Panc1 (cell line): ENCODE measurements at regions of chr6 and their contacts with region 1.

Region 1: DNA sequence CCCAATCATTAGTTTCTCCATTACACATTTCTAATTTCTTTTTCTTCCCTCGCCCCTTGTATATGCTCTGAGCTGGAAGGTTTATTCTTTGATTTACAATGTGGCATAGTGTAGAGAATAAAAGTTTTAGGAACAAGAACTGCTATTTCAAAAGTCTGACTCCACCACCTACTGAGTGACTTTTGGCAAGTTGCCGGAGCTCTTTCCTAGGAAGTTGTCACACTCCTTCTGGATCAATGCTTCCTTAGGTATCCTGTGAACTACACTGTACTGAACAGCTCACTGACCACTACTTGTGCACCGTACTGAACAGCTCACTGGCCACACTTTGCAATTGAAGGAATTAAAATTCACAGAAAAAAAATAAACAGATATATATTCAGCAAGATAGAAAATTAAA is 458.2 kb downstream of the FRK start:
- DNase-seq: no peak
- ATAC-seq: no peak
- H3K4me3 ChIP-seq: no peak overlapping the region
- H3K27ac ChIP-seq: no peak overlapping the region
- H3K4me1 ChIP-seq: no peaks in the 10 kb centered on the region
- H3K27me3 ChIP-seq: no peaks in the 10 kb centered on the region
- CTCF ChIP-seq: no peak

Region 2: DNA sequence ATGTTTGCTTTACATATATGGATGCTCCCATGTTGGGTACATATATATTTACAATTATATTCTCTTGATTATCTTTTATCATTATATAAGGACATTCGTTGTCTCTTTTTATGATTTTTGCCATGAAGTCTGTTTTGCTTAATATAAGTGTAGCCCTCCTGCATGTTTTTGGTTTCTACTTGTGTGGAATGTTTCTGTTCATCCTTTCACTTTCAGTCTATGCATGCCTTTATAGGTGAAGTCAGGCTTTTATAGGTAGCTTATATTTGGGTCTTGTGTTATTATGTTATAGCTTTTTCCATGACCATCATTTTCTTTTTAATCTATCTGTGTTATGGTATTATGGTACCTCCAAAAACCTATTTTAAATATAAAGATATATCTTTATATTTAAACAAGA is 647.1 kb before region 1 on chr6:
- CTCF ChIA-PET with region 1: no interaction called
- POLR2A ChIA-PET with region 1: interaction called, 13 read pairs
- in situ Hi-C with region 1: no loop called
- intact Hi-C with region 1: no loop called
- DNase-seq: no peak
- ATAC-seq: no peak
- H3K4me3 ChIP-seq: no peak overlapping the region
- H3K27ac ChIP-seq: no peak overlapping the region
- H3K4me1 ChIP-seq: no peaks in the 10 kb centered on the region
- H3K27me3 ChIP-seq: no peaks in the 10 kb centered on the region
- CTCF ChIP-seq: no peak

Region 3: DNA sequence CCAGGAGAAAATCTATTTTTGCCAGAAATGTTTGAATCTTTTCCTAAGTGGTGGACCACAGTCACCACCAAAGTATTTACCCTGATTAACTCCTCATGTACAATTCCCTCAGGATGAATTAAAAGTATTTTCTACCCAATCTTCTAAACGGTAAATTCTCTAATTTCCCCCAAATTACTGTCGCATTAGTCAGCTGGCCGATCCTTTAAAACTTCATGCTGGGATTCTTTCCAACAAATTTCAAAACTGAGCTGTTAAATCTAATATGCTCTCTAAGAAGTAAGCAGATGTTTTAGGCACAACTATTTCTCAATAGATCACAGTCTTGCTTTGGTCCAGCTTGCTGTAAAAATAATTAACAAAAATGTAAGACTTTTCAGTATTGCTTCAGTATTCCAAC is 11.0 kb after region 1 on chr6:
- CTCF ChIA-PET with region 1: no interaction called
- POLR2A ChIA-PET with region 1: no interaction called
- in situ Hi-C with region 1: no loop called
- intact Hi-C with region 1: no loop called
- DNase-seq: no peak
- ATAC-seq: no peak
- H3K4me3 ChIP-seq: no peak overlapping the region
- H3K27ac ChIP-seq: no peak overlapping the region
- H3K4me1 ChIP-seq: no peaks in the 10 kb centered on the region
- H3K27me3 ChIP-seq: no peaks in the 10 kb centered on the region
- CTCF ChIP-seq: no peak

Region 4: DNA sequence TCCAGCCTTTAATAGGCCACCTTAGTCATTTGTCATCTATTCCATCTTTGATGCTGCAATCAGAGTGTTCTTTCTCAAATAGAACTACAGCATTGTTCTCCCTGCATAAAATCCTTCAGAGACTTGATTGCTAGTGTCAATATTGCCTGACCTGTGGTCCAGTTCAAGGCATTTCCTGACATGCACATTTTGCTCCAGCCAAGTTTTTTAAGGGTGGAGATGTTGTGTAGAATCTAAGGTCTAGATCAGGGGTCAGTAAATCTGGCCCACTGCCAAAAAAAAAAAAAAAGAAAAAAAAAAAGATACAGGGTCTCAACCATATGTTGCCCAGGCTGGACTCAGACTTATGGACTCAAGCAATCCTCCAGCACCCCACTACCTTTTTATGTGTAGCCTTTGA is 103.9 kb after region 1 on chr6:
- CTCF ChIA-PET with region 1: no interaction called
- POLR2A ChIA-PET with region 1: no interaction called
- in situ Hi-C with region 1: no loop called
- intact Hi-C with region 1: no loop called
- DNase-seq: no peak
- ATAC-seq: no peak
- H3K4me3 ChIP-seq: no peak overlapping the region
- H3K27ac ChIP-seq: no peak overlapping the region
- H3K4me1 ChIP-seq: no peaks in the 10 kb centered on the region
- H3K27me3 ChIP-seq: no peaks in the 10 kb centered on the region
- CTCF ChIP-seq: no peak